MCF 10A (cell line): ENCODE measurements at regions of chr7 and their contacts with region 1.

Region 1: GRCh38 chr7:107594961-107595737 is 15.1 kb downstream of the BCAP29 start:
- DNase-seq: peak; percentile 92
- H3K4me3 Mint-ChIP-seq: peak overlapping the region; percentile 33
- H3K27ac Mint-ChIP-seq: peak overlapping the region; percentile 91
- H3K4me1 Mint-ChIP-seq: peaks cover 27% of the 10 kb centered on the region
- H3K27me3 Mint-ChIP-seq: no peaks in the 10 kb centered on the region
- CTCF ChIP-seq: no peak

Region 2: GRCh38 chr7:107563775-107564552 is 31.2 kb before region 1 on chr7 and contains the starts of genes COG5 and DUS4L:
- CTCF ChIA-PET with region 1: interaction called, 4 read pairs
- POLR2A ChIA-PET with region 1: interaction called, 21 read pairs
- intact Hi-C with region 1: no loop called
- DNase-seq: peak; percentile 80
- H3K4me3 Mint-ChIP-seq: peak within 1 kb of the TSS; percentile 75
- H3K27ac Mint-ChIP-seq: peak within 1 kb of the TSS; percentile 79
- H3K4me1 Mint-ChIP-seq: peaks cover 42% of the 10 kb centered on the region
- H3K27me3 Mint-ChIP-seq: no peaks in the 10 kb centered on the region
- CTCF ChIP-seq: no peak
- total RNA-seq, gene COG5: 40.3 and 40.9 TPM in 2 replicates
- total RNA-seq, gene DUS4L: 14.5 and 16.3 TPM in 2 replicates

Region 3: DNA sequence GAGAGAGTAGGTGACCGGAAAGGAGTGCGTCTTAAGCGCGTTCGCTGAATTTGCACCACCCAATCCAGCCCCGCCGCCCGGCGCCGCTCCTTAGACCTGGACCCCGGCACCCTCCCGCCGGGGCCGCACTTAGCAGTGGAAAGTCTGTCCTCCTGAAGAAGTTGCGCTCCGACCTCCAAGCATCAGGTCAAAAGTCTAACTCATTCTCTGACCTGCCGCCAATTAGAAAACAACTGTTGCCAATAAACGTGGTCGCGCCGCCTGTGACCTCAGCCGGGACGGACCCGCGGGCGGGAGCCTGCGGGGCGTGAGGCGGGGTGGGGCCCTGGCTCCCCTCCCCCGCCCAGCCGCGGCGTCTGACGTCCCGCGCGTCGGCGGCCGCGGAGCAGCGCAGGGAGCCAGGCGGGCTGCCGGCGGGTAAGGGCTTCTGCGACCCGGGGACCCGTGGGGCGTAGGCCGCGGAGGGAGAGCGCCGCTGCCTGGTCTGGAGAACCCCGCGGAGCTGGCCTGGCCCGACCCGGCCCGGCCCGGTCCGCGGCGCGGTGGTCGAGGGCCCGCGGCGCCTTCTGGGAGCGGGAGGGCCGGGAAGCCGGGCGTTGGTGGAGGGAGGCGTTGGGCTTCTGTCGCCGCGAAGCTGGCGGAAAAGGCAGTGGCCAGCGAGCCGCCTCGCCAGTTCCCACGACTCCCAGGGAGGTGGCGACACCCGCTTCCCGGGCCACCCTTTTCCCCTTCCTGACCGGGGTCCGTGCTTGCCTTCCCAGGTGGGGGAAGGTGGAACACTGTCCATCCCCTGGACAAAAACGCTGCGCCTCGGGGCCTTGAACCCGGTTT is 15.0 kb before region 1 on chr7 and contains the start of gene BCAP29:
- CTCF ChIA-PET with region 1: interaction called, 4 read pairs
- POLR2A ChIA-PET with region 1: interaction called, 43 read pairs
- intact Hi-C with region 1: loop called (anchors 2 kb)
- DNase-seq: peak; percentile 71
- H3K4me3 Mint-ChIP-seq: peak within 1 kb of the TSS; percentile 87
- H3K27ac Mint-ChIP-seq: peak within 1 kb of the TSS; percentile 75
- H3K4me1 Mint-ChIP-seq: peaks cover 20% of the 10 kb centered on the region
- H3K27me3 Mint-ChIP-seq: no peaks in the 10 kb centered on the region
- CTCF ChIP-seq: no peak
- total RNA-seq, gene BCAP29: 61.5 and 73.4 TPM in 2 replicates